K562 (cell line): ENCODE measurements at regions of chr3 and their contacts with region 1.

Region 1: DNA sequence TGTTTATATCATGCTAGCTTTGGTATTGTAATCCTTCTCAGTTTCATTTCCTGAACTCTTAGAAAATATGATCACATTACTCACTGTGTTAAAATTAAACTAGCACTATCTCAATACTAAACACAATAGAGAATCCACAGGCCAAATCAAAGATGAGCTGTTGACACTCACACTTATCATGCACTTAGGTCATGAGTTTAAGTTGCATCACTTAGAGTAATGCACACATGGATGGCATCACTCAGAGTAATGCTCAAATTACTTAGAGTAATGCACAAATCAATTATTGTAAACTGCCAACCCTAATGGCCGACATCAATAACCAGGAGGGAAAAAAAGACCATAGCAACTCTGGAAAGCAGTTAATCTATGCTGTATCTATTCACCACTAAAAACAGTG is 40.0 kb upstream of the MCF2L2 start:
- DNase-seq: no peak
- ATAC-seq: no peak
- H3K4me3 ChIP-seq: no peak overlapping the region
- H3K27ac ChIP-seq: no peak overlapping the region
- H3K4me1 ChIP-seq: no peaks in the 10 kb centered on the region
- H3K27me3 ChIP-seq: no peaks in the 10 kb centered on the region
- CTCF ChIP-seq: no peak
- EP300 ChIP-seq: no peak
- POLR2A ChIP-seq: no peak
- RAD21 ChIP-seq: no peak

Region 2: GRCh38 chr3:183385698-183386613 is 82.5 kb before region 1 on chr3:
- CTCF ChIA-PET with region 1: no interaction called
- POLR2A ChIA-PET with region 1: no interaction called
- in situ Hi-C with region 1: no loop called
- intact Hi-C with region 1: loop called (anchors 5 kb)
- DNase-seq: peak; percentile 59 to 79 (median 60)
- ATAC-seq: peak; percentile 89
- H3K4me3 ChIP-seq: no peak overlapping the region
- H3K27ac ChIP-seq: no peak overlapping the region
- H3K4me1 ChIP-seq: peaks cover 0 to 3% of the 10 kb centered on the region in 2 experiments; a peak in 3 of 5 replicates
- H3K27me3 ChIP-seq: no peaks in the 10 kb centered on the region
- CTCF ChIP-seq: peak; percentile 75 to 85 (median 75)
- EP300 ChIP-seq: no peak
- POLR2A ChIP-seq: no peak
- RAD21 ChIP-seq: peak; percentile 88 to 92

Region 3: DNA sequence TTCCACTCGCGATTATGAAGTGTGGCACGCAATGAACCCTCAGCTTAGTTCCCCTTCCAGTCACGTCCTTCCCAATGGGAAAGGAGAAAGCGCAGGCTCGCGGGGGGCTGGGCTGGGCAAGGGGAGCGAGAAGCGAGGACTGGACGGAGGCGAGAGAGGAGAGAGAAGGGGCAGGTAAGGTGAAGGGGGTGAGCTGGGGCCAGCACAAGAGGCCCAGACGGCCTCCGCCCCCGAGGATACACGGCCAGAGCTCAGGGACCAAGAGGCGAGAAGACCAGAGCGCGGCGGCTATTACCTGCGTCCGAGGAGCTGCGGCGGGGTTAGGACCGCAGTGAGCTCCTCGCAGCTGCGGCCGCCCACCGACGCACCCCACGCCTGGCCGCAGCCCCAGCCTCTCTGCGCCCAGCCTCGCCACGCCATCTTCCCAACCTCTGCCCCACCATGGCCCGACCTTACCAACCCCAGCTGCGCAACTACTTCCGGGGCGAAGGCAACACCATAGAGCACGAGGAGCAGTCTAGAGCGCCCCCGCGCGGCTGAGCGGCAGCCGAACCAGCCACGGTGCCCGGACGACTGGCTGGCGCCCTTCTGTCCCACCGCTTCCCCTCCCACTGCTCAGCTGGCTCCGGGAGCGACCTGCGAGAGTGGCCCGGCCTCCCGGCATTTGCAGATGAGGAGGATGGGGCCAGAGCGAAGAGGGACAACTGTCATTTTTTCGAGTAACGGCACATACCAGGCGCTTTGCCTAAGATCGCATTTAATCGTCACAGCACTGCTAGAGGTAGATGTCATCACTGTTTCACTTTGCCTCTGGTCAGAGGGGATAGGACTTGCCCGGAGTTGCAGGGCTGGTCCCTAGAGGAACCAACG is 416.2 kb after region 1 on chr3 and contains the start of gene PARL:
- CTCF ChIA-PET with region 1: interaction called, 3 read pairs
- POLR2A ChIA-PET with region 1: no interaction called
- in situ Hi-C with region 1: no loop called
- intact Hi-C with region 1: loop called (anchors 2 kb)
- DNase-seq: peak; percentile 92 to 97 (median 92)
- ATAC-seq: peak; percentile 99
- H3K4me3 ChIP-seq: peak within 1 kb of the TSS; percentile 96
- H3K27ac ChIP-seq: peak within 1 kb of the TSS; percentile 87
- H3K4me1 ChIP-seq: peaks cover 12% of the 10 kb centered on the region in 2 experiments; a peak in 4 of 5 replicates
- H3K27me3 ChIP-seq: peaks cover 0 to 7% of the 10 kb centered on the region in 2 experiments; a peak in 2 of 5 replicates
- CTCF ChIP-seq: peak; percentile 94 to 97 (median 96)
- EP300 ChIP-seq: peak; percentile 53
- POLR2A ChIP-seq: peak; percentile 94
- RAD21 ChIP-seq: peak; percentile 77 to 81
- polyA plus RNA-seq, gene PARL: 39.5 to 43.6 TPM